Activated naive CD4-positive, alpha-beta T cell treated with anti-CD3 and anti-CD28 coated beads for 36 hours (primary cell): ENCODE measurements at regions of chr20 and their contacts with region 1.

Region 1: DNA sequence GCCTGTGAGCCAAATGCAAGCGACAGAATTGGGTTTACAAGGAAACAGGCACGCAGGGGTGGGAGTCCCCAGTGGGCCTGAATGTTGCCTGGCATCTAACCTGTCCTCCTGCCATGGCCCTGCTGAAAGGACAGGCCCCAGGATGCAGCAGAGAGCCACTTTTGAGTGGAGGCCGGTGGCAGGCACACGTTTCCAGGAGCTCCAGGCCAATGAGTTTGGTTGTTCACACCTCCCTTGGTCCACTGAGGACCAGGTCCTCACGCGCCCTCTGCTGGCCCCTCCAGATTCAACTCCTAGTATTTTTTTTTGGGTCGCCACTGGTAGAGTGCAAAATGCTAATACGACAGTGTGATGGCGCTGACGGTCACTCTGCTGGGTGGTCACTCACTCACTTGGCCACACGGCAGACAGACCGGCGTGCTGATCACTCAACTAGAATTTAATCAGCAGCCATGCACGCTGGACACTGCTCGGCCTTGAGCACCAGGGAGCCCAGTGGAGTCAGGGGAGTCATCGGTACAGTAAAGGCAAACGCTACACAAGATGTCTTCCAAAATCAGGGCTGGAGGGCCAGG is 81.7 kb upstream of the NFATC2 start:
- DNase-seq: peak; percentile 82
- H3K4me3 Mint-ChIP-seq: no peak overlapping the region
- H3K27ac Mint-ChIP-seq: no peak overlapping the region
- H3K4me1 Mint-ChIP-seq: peaks cover 5% of the 10 kb centered on the region
- H3K27me3 Mint-ChIP-seq: no peaks in the 10 kb centered on the region

Region 2: GRCh38 chr20:50987592-50988210 is 636.5 kb before region 1 on chr20:
- CTCF ChIA-PET with region 1: interaction called, 3 read pairs
- intact Hi-C with region 1: loop called (anchors 1 kb)
- DNase-seq: peak; percentile 78
- H3K4me3 Mint-ChIP-seq: no peak overlapping the region
- H3K27ac Mint-ChIP-seq: no peak overlapping the region
- H3K4me1 Mint-ChIP-seq: no peaks in the 10 kb centered on the region
- H3K27me3 Mint-ChIP-seq: peaks cover 23% of the 10 kb centered on the region

Region 3: DNA sequence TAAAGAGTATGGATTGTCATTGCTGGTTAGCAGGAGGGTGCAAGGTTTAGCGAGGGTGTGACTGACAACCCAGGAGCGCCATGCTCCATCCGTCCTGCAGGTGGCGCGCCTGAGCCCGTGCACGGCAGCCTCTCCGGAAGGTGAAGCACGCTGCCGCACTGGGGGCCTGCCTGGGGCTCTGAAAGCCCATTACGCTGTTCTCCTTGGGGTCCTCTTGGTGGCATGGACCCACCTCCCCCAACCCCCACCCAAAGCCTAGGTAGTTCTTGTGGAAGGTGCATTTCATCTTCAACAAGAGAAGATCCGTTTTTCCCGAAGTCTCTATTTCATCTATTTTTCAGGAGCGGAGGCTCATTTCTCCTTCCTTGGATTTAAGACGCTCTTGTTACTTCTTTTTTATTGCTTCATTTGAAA is 403.9 kb before region 1 on chr20:
- CTCF ChIA-PET with region 1: no interaction called
- intact Hi-C with region 1: loop called (anchors 5 kb)
- DNase-seq: peak; percentile 76
- H3K4me3 Mint-ChIP-seq: no peak overlapping the region
- H3K27ac Mint-ChIP-seq: no peak overlapping the region
- H3K4me1 Mint-ChIP-seq: peaks cover 15% of the 10 kb centered on the region
- H3K27me3 Mint-ChIP-seq: peaks cover 56% of the 10 kb centered on the region

Region 4: GRCh38 chr20:51372176-51372803 is 252.0 kb before region 1 on chr20:
- CTCF ChIA-PET with region 1: interaction called, 6 read pairs
- intact Hi-C with region 1: loop called (anchors 1 kb)
- DNase-seq: peak; percentile 77
- H3K4me3 Mint-ChIP-seq: no peak overlapping the region
- H3K27ac Mint-ChIP-seq: no peak overlapping the region
- H3K4me1 Mint-ChIP-seq: peaks cover 1% of the 10 kb centered on the region
- H3K27me3 Mint-ChIP-seq: no peaks in the 10 kb centered on the region

Region 5: DNA sequence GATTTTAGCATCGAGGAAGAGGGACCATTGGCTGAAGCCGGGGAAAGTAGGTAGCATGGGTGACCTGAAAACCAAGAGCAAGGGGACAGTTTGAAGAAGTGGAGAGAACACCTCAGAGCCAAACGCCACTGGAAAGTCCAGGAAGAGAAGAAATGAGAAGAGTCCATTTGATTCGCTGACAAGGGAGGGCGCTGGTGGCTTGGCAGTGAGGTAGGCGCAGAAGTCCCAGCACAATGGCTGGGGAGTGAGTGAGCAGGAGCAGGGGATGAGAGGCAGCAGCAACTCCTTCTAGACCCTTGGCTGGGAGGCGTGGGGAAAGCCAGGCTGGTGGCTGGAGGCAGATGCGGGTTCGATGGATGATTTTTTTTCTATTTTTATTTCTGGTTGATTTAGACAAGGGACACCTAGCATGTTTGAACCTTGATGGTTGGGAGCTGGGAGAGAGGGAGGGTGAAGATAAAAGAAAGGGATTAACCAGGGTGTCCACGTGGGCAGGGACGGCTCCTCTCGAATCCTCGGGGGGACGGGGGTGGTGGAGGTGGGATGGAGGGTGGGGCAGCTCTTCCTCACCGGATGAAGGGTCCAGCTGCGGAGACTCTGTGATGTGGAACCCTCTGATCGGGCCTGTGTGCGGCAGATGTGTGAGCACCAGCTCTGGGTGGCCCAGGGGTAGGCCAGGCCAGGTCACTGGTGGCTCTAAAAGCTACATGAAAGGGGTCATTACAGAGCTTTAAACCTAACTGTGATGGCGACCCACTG is 245.9 kb before region 1 on chr20:
- CTCF ChIA-PET with region 1: interaction called, 5 read pairs
- intact Hi-C with region 1: loop called (anchors 1 kb)
- DNase-seq: peak; percentile 60
- H3K4me3 Mint-ChIP-seq: no peak overlapping the region
- H3K27ac Mint-ChIP-seq: no peak overlapping the region
- H3K4me1 Mint-ChIP-seq: no peaks in the 10 kb centered on the region
- H3K27me3 Mint-ChIP-seq: no peaks in the 10 kb centered on the region

Region 6: GRCh38 chr20:51848346-51848745 is 224.1 kb after region 1 on chr20:
- CTCF ChIA-PET with region 1: no interaction called
- intact Hi-C with region 1: no loop called
- DNase-seq: no peak
- H3K4me3 Mint-ChIP-seq: no peak overlapping the region
- H3K27ac Mint-ChIP-seq: no peak overlapping the region
- H3K4me1 Mint-ChIP-seq: no peaks in the 10 kb centered on the region
- H3K27me3 Mint-ChIP-seq: peaks cover 2% of the 10 kb centered on the region

Region 7: GRCh38 chr20:52160621-52161204 is 536.5 kb after region 1 on chr20:
- CTCF ChIA-PET with region 1: no interaction called
- intact Hi-C with region 1: no loop called
- DNase-seq: no peak
- H3K4me3 Mint-ChIP-seq: no peak overlapping the region
- H3K27ac Mint-ChIP-seq: no peak overlapping the region
- H3K4me1 Mint-ChIP-seq: no peaks in the 10 kb centered on the region
- H3K27me3 Mint-ChIP-seq: no peaks in the 10 kb centered on the region